PC-3 (cell line): ENCODE measurements at regions of chr1 and their contacts with region 1.

Region 1: GRCh38 chr1:218945050-218945449 is 228.6 kb upstream of the LYPLAL1 start:
- DNase-seq: peak; percentile 93
- ATAC-seq: peak; percentile 77
- H3K4me3 ChIP-seq: no peak overlapping the region
- H3K27ac ChIP-seq: peak overlapping the region; percentile 62
- H3K4me1 ChIP-seq: peaks cover 25% of the 10 kb centered on the region
- H3K27me3 ChIP-seq: no peaks in the 10 kb centered on the region
- CTCF ChIP-seq: no peak

Region 2: GRCh38 chr1:218473522-218473921 is 471.5 kb before region 1 on chr1:
- CTCF ChIA-PET with region 1: no interaction called
- POLR2A ChIA-PET with region 1: no interaction called
- intact Hi-C with region 1: loop called (anchors 10 kb)
- DNase-seq: no peak
- ATAC-seq: no peak
- H3K4me3 ChIP-seq: no peak overlapping the region
- H3K27ac ChIP-seq: no peak overlapping the region
- H3K4me1 ChIP-seq: peaks cover 28% of the 10 kb centered on the region
- H3K27me3 ChIP-seq: no peaks in the 10 kb centered on the region
- CTCF ChIP-seq: no peak

Region 3: DNA sequence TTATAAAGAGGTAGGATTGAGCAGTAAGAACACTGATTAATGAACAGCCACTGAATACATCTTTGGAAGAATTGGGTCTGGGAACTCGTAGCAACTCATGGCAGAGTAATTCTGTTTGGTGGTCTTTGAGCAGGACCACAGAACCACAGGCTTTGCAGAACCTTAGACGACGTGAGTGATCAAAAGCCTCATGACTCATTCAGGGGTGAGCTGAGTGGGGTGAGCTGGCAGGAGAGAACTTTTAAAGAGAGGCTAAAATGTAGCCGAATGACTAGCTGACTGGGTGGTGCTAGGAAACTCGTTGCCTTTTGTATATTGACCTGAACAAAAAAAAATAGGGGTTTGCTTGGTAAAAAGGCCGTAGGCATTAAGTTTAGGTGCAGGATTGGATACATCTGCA is 286.2 kb before region 1 on chr1:
- CTCF ChIA-PET with region 1: no interaction called
- POLR2A ChIA-PET with region 1: no interaction called
- intact Hi-C with region 1: loop called (anchors 5 kb)
- DNase-seq: peak; percentile 95
- ATAC-seq: peak; percentile 72
- H3K4me3 ChIP-seq: no peak overlapping the region
- H3K27ac ChIP-seq: peak overlapping the region; percentile 71
- H3K4me1 ChIP-seq: peaks cover 64% of the 10 kb centered on the region
- H3K27me3 ChIP-seq: no peaks in the 10 kb centered on the region
- CTCF ChIP-seq: no peak

Region 4: GRCh38 chr1:218886101-218886871 is 58.8 kb before region 1 on chr1:
- CTCF ChIA-PET with region 1: no interaction called
- POLR2A ChIA-PET with region 1: no interaction called
- intact Hi-C with region 1: no loop called
- DNase-seq: peak; percentile 84
- ATAC-seq: peak; percentile 37
- H3K4me3 ChIP-seq: no peak overlapping the region
- H3K27ac ChIP-seq: peak overlapping the region; percentile 51
- H3K4me1 ChIP-seq: peaks cover 38% of the 10 kb centered on the region
- H3K27me3 ChIP-seq: no peaks in the 10 kb centered on the region
- CTCF ChIP-seq: no peak

Region 5: GRCh38 chr1:219173758-219174588 is 228.9 kb after region 1 on chr1 and contains the start of gene LYPLAL1:
- CTCF ChIA-PET with region 1: no interaction called
- POLR2A ChIA-PET with region 1: no interaction called
- intact Hi-C with region 1: loop called (anchors 5 kb)
- DNase-seq: peak; percentile 98
- ATAC-seq: peak; percentile 75
- H3K4me3 ChIP-seq: peak within 1 kb of the TSS; percentile 69
- H3K27ac ChIP-seq: peak within 1 kb of the TSS; percentile 23
- H3K4me1 ChIP-seq: peaks cover 47% of the 10 kb centered on the region
- H3K27me3 ChIP-seq: no peaks in the 10 kb centered on the region
- CTCF ChIP-seq: peak; percentile 51; the same call in 1 of the 2 replicates
- total RNA-seq, gene LYPLAL1: 15.8 and 21.3 TPM in 2 replicates

Region 6: DNA sequence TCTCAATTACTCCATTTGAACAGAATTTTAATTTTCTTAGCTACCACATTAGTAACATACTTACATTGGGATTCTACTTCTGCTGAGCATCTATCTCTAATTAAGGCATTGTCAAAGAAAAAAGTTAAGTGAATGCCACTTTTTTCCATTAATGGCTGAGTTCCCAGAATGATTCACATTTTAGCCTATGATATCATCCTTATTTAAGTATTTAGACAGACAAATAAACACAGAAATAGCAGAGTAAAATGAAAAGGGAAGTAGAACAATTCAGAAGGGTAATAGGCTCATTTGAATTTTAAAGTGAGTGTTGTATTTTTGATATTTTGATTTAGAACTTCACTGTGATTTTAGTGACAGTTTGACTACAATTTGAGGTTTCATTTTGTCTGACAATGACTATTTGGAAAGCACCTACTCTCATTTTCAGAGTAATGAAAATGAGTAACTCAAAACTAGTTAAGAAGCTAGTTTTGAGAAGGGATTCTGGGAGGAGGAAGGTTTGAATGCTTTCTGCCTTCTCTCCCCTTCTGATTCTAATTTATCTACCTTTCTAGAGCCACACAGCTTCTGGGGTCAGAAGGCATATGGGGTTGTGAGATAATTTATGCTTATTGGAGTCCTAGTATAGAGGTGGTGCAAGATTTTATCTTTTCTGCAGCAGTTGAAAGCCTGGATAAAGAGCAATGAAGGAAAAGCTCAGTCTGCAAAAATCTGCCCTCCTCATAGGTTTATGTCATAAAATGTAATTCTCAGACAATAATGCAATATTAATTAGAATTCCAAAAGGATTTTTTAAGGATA is 244.2 kb after region 1 on chr1:
- CTCF ChIA-PET with region 1: no interaction called
- POLR2A ChIA-PET with region 1: no interaction called
- intact Hi-C with region 1: loop called (anchors 5 kb)
- DNase-seq: peak; percentile 78
- ATAC-seq: peak; percentile 69
- H3K4me3 ChIP-seq: peak overlapping the region; percentile 4; the same call in 1 of the 2 replicates
- H3K27ac ChIP-seq: peak overlapping the region; percentile 4; the same call in 1 of the 2 replicates
- H3K4me1 ChIP-seq: peaks cover 17% of the 10 kb centered on the region
- H3K27me3 ChIP-seq: no peaks in the 10 kb centered on the region
- CTCF ChIP-seq: no peak